IMR-90 (cell line): ENCODE measurements at regions of chr11 and their contacts with region 1.

Region 1: DNA sequence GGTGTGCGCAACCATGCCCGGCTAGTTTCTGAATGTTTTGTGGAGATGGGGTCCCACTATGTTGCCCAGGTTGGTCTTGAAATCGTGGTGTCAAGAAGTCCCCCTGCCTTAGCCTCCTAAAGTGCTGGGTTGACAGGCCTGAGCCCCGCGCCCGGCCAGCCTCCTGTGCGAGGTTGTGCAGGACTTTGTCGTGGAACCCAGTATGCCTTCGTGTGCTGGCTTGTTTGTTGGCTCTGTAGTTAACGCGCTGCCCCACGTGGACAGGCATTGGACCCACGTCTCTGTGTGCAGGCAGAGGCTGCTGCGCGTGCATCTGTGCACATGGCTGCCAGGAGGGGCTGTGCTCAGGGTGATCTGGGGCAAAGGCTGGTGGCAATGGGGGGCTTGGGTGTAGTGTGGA is 33.9 kb upstream of the ZNF195 start:
- DNase-seq: no peak
- ATAC-seq: no peak
- H3K4me3 ChIP-seq: no peak overlapping the region
- H3K27ac ChIP-seq: no peak overlapping the region
- H3K4me1 ChIP-seq: no peaks in the 10 kb centered on the region
- H3K27me3 ChIP-seq: no peaks in the 10 kb centered on the region; the same call in 1 of the 2 replicates
- CTCF ChIP-seq: no peak
- POLR2A ChIP-seq: no peak
- RAD21 ChIP-seq: no peak

Region 2: GRCh38 chr11:3037040-3037944 is 375.5 kb before region 1 on chr11:
- CTCF ChIA-PET with region 1: no interaction called
- POLR2A ChIA-PET with region 1: no interaction called
- dilution Hi-C with region 1: no loop called
- in situ Hi-C with region 1: no loop called
- intact Hi-C with region 1: loop called (anchors 10 kb)
- DNase-seq: peak; percentile 61
- ATAC-seq: peak; percentile 91
- H3K4me3 ChIP-seq: no peak overlapping the region
- H3K27ac ChIP-seq: no peak overlapping the region
- H3K4me1 ChIP-seq: no peaks in the 10 kb centered on the region
- H3K27me3 ChIP-seq: no peaks in the 10 kb centered on the region
- CTCF ChIP-seq: peak; percentile 76
- POLR2A ChIP-seq: no peak
- RAD21 ChIP-seq: peak; percentile 84

Region 3: GRCh38 chr11:3057069-3057963 is 355.5 kb before region 1 on chr11 and contains the start of gene CARS1:
- CTCF ChIA-PET with region 1: no interaction called
- POLR2A ChIA-PET with region 1: no interaction called
- dilution Hi-C with region 1: no loop called
- in situ Hi-C with region 1: loop called (anchors 25 kb)
- intact Hi-C with region 1: no loop called
- DNase-seq: peak; percentile 93
- ATAC-seq: peak; percentile 90
- H3K4me3 ChIP-seq: peak within 1 kb of the TSS; percentile 87
- H3K27ac ChIP-seq: peak within 1 kb of the TSS; percentile 97
- H3K4me1 ChIP-seq: peaks cover 11% of the 10 kb centered on the region
- H3K27me3 ChIP-seq: no peaks in the 10 kb centered on the region
- CTCF ChIP-seq: no peak
- POLR2A ChIP-seq: peak; percentile 96
- RAD21 ChIP-seq: 0 out of 2 replicates have a peak, but pooled peaks have one; percentile 15
- total RNA-seq, gene CARS1: 65.8 and 78.3 TPM in 2 replicates

Region 4: GRCh38 chr11:3189196-3189843 is 223.5 kb before region 1 on chr11:
- CTCF ChIA-PET with region 1: no interaction called
- POLR2A ChIA-PET with region 1: no interaction called
- dilution Hi-C with region 1: no loop called
- in situ Hi-C with region 1: no loop called
- intact Hi-C with region 1: no loop called
- DNase-seq: no peak
- ATAC-seq: no peak; the same call in 1 of the 2 replicates
- H3K4me3 ChIP-seq: no peak overlapping the region
- H3K27ac ChIP-seq: no peak overlapping the region
- H3K4me1 ChIP-seq: no peaks in the 10 kb centered on the region
- H3K27me3 ChIP-seq: peaks cover 39% of the 10 kb centered on the region
- CTCF ChIP-seq: no peak
- POLR2A ChIP-seq: no peak
- RAD21 ChIP-seq: no peak

Region 5: DNA sequence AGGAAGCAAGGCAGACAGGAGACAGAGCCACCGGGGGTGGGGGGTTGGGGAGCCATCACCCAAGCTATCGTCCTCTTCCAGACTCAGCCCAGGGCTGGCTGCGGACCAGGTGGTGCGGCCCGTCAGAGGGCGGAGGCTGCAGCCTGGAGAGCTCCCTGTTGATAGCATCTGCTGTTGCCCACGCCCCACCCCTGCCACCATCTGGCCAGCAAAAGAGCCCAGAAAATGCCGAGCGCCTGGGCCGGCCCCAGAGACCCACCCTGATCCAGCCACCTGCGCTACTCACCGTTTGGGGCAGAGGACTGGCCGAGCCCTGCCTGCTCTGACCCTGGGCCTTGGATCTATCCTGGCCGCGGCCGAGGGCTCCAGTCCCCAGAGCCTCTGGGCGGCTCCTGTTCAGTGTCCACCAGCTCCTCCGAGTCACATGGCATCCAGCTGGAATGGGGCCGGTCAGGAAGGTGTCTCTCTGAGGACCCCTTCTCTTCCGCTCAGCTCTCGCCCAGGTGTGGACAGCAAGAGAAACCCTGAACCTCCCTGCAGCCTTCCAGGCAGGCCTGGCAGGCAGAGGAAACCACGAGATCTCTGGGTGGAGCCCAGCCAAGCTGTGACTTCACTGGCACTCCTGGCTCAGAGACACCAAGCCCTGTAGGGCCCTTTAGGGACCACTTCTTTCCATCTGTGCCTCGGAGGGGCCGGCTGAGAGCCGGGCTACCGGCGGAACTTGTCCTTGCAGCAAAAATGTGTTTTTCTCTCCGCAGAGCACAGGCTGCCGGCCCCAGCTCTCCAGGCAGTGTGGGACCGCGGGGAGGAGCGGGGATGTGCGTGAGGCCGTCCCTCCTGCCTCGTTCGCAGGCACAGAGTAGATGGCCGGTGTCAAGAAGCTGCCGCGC is 180.7 kb before region 1 on chr11 and contains the start of gene MRGPRE:
- CTCF ChIA-PET with region 1: no interaction called
- POLR2A ChIA-PET with region 1: no interaction called
- dilution Hi-C with region 1: no loop called
- in situ Hi-C with region 1: no loop called
- intact Hi-C with region 1: no loop called
- DNase-seq: no peak
- ATAC-seq: peak; percentile 24
- H3K4me3 ChIP-seq: no peak within 1 kb of the TSS
- H3K27ac ChIP-seq: no peak within 1 kb of the TSS
- H3K4me1 ChIP-seq: no peaks in the 10 kb centered on the region
- H3K27me3 ChIP-seq: peaks cover 53% of the 10 kb centered on the region
- CTCF ChIP-seq: no peak
- POLR2A ChIP-seq: no peak
- RAD21 ChIP-seq: no peak
- total RNA-seq, gene MRGPRE: not detected in 2 replicates